CD8-positive, alpha-beta memory T cell (primary cell): ENCODE measurements at regions of chr17 and their contacts with region 1.

Region 1: DNA sequence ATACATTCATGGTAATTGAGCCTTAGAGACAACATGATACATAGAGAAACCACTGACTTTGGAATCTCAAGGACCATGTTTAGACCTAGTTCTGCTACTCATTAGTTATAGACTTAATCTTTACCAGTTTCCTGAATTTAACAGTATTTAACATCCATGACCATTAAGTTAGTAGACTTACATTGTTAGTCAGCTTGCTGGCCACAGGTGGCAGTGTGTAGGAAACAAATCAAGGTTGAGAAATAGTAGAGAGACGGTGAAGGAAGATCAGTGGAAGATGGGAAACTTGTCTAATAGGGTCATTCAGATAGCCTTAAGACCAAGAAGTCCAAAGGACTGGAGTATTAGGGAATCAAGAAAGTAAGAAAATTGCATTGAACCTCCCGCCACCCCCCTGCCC is 31.0 kb downstream of the OMG start:
- DNase-seq: peak in 1 of 5 donors; percentile 28
- H3K4me3 ChIP-seq: no peak overlapping the region
- H3K4me3 Mint-ChIP-seq: no peak overlapping the region
- H3K27ac ChIP-seq: no peak overlapping the region
- H3K27ac Mint-ChIP-seq: peak overlapping the region in 1 of 8 donors; percentile 32
- H3K4me1 ChIP-seq: no peaks in the 10 kb centered on the region
- H3K4me1 Mint-ChIP-seq: no peaks in the 10 kb centered on the region
- H3K27me3 ChIP-seq: no peaks in the 10 kb centered on the region
- H3K27me3 Mint-ChIP-seq: no peaks in the 10 kb centered on the region

Region 2: GRCh38 chr17:31373150-31374093 is 107.4 kb after region 1 on chr17:
- CTCF ChIA-PET with region 1: interaction called, 12 read pairs
- POLR2A ChIA-PET with region 1: no interaction called
- DNase-seq: peak in 2 of 5 donors; percentile 36 to 57
- H3K4me3 ChIP-seq: no peak overlapping the region
- H3K4me3 Mint-ChIP-seq: no peak overlapping the region
- H3K27ac ChIP-seq: no peak overlapping the region
- H3K27ac Mint-ChIP-seq: peak overlapping the region in 2 of 8 donors; percentile 10 to 24
- H3K4me1 ChIP-seq: no peaks in the 10 kb centered on the region
- H3K4me1 Mint-ChIP-seq: peaks cover 4 to 24% (median 23%) of the 10 kb centered on the region in 3 donors
- H3K27me3 ChIP-seq: no peaks in the 10 kb centered on the region
- H3K27me3 Mint-ChIP-seq: no peaks in the 10 kb centered on the region